Gastrocnemius medialis (tissue), 4 donors: ENCODE measurements at regions of chr21 and their contacts with region 1.

Region 1: DNA sequence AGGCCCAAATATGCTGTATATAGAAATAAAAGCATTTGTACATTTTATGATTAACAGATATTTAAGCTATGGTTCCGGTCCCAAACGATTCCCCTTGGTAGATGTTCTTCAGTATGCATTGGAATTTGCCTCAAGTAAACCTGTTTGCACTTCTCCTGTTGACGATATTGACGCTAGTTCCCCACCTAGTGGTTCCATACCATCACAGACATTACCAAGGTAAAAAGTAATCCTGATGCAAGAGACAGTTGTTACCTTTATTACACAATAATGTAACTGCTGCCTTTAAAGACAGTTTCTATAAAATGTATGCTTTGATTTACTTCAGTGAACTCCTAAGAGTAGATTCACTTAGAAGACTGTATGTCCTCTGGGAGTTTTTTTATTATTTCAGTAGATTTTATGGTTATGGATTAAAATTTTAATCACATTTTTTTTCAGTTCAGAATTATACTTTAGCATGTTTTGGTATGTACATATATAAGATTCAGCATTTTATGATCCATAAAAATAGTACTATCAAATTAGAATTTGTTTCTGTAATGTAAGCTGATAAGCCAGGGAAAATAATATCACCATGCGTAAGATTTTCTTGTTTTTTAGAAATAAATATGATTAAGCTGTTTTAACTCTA is 96.5 kb downstream of the USP25 start:
- DNase-seq: peak; percentile 27 to 51
- ATAC-seq: peak; percentile 74 to 79
- H3K4me3 ChIP-seq: peak overlapping the region; percentile 21 to 32 (median 25)
- H3K27ac ChIP-seq: peak overlapping the region; percentile 85 to 92 (median 88)
- H3K4me1 ChIP-seq: peaks cover 24 to 30% of the 10 kb centered on the region in 2 donors
- H3K27me3 ChIP-seq: no peaks in the 10 kb centered on the region
- CTCF ChIP-seq: peak; percentile 42 to 62 (median 58)
- POLR2A ChIP-seq: no peak

Region 2: DNA sequence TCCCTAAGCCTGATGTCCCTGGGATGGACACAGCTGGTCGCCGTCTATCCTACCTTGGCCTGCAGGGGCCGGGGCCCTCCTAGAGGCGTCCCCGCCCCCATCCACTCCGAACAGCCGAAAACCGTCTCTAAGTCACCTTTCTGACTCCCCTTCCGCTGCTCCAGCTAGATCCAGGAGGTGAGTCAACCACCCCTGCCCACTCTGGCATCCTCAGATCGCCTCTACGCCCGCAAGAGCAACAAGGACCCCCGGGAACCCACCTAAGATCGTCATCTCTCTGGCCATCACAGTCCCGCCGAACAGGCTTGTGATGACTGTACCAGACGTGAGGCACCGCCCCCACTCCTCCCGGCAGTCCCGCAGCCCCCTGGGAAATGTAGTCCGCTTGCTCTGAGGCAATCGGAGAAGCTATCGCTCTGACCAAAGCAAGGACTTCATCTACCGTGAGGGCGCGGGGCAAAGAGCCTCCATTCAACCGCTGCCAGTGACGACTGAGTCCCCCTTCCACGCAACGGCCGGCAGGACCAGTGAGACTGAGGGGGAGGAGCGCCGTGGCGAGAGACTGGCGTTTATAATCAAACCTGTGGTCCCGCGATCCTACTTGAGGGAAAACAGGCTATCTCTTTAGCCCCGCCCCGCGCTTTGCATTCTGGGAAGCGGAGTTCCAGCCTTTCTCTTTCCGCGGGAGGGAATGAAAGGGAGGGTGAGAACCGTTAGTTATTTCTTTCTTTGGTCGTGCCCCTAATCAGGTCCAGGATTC is 1443.2 kb before region 1 on chr21 and contains the start of gene HSPA13:
- in situ Hi-C with region 1: no loop called
- intact Hi-C with region 1: loop called (anchors 5 kb)
- DNase-seq: peak; percentile 99 to 100
- ATAC-seq: peak; percentile 99
- H3K4me3 ChIP-seq: peak within 1 kb of the TSS; percentile 76 to 96 (median 82)
- H3K27ac ChIP-seq: peak within 1 kb of the TSS; percentile 85 to 90 (median 86)
- H3K4me1 ChIP-seq: peaks cover 10 to 21% of the 10 kb centered on the region in 2 donors
- H3K27me3 ChIP-seq: no peaks in the 10 kb centered on the region
- CTCF ChIP-seq: no peak
- POLR2A ChIP-seq: peak; percentile 61 to 67
- total RNA-seq, gene HSPA13: 4.8 to 8.3 (median 7.4) TPM

Region 3: DNA sequence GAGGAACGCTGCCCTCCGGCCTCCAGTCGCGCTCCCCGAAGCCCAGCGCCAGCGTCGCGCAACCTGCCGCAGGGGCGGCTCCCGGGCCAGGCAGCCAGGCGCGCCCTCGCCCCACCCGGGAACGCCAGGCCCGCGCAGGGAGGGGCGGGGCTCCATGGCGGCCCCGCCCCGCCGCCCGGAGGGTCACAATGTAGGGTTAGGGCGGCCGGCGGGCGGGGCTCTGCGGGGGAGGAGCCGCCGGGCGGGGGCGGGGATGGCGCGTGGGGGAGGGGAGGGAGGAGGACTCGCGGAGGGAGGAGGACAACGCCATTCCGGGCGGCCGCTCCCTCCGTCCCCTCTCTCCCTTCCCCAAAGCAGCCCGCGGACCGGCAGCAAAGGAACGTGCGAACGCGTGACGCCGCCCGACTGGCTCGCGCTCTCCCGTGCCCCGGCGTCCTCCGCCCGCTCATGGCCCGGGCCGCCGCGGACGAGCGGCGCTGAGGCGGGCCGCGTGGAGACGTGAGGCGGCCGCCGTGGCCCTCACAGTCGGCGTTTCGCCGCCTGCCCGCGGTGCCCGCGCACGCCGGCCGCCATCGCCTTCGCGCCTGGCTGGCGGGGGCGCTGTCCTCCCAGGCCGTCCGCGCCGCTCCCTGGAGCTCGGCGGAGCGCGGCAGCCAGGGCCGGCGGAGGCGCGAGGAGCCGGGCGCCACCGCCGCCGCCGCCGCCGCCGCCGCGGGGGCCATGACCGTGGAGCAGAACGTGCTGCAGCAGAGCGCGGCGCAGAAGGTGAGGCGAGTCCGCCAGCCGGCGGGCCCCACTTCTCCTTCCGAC is 96.4 kb before region 1 on chr21 and contains the start of gene USP25:
- in situ Hi-C with region 1: loop called in 3 of 4 experiments (anchors 5 to 10 kb)
- intact Hi-C with region 1: loop called (anchors 1 kb)
- DNase-seq: peak; percentile 91 to 93
- ATAC-seq: peak; percentile 86
- H3K4me3 ChIP-seq: peak within 1 kb of the TSS; percentile 60 to 83 (median 78)
- H3K27ac ChIP-seq: peak within 1 kb of the TSS; percentile 92 to 95 (median 94)
- H3K4me1 ChIP-seq: peaks cover 13 to 22% of the 10 kb centered on the region in 2 donors
- H3K27me3 ChIP-seq: no peaks in the 10 kb centered on the region
- CTCF ChIP-seq: peak in 3 of 5 experiments; percentile 16 to 42 (median 28)
- POLR2A ChIP-seq: peak; percentile 87 to 95
- total RNA-seq, gene USP25: 99.4 to 130 (median 107) TPM

Region 4: DNA sequence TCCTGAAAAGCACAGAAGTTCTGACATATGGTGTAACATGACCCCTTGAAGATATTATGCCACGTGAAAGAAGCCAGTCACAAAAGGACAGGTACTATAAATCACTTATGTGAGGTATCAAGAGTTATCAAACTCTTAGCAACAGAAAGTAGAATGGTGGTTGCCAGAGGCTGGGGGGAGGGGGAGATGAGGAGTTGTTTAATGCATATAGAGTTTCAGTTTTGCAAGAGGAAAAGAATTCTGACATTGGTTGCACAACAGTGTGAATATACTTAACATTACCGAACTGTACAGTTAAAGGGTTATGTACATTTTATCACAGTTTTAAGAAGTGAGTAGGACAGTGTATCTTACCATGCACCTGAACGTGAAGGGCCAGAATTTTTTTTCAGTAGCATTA is 16.4 kb before region 1 on chr21:
- in situ Hi-C with region 1: no loop called
- intact Hi-C with region 1: loop called (anchors 2 kb)
- DNase-seq: peak; percentile 51 to 71
- ATAC-seq: peak; percentile 69 to 75
- H3K4me3 ChIP-seq: no peak overlapping the region
- H3K27ac ChIP-seq: peak overlapping the region; percentile 72 to 79 (median 74)
- H3K4me1 ChIP-seq: peaks cover 31 to 32% of the 10 kb centered on the region in 2 donors
- H3K27me3 ChIP-seq: no peaks in the 10 kb centered on the region
- CTCF ChIP-seq: no peak
- POLR2A ChIP-seq: no peak

Region 5: DNA sequence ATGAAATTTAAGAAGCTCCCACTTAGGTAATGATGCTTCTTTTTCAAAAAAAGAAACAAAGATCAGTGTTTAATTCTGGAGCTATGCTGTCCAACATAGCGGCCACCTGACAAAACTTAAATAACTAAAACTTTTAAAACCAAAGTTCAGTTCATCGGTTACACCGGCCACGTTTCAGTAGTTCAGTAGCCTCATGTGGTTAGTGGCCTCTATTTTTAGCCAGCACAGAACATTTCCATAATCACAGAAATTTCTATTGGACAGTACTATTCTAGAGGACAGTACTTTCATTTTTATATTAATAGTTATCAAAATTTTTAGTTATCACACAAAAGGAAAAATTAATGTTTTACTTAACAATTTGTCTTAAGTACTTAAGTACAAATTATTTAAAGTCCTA is 44.6 kb after region 1 on chr21:
- in situ Hi-C with region 1: no loop called
- intact Hi-C with region 1: no loop called
- DNase-seq: no peak
- ATAC-seq: no peak
- H3K4me3 ChIP-seq: no peak overlapping the region
- H3K27ac ChIP-seq: no peak overlapping the region
- H3K4me1 ChIP-seq: no peaks in the 10 kb centered on the region
- H3K27me3 ChIP-seq: no peaks in the 10 kb centered on the region
- CTCF ChIP-seq: no peak
- POLR2A ChIP-seq: no peak